ENCODE measurements at regions of chr12 and their contacts with region 1.

Region 1: DNA sequence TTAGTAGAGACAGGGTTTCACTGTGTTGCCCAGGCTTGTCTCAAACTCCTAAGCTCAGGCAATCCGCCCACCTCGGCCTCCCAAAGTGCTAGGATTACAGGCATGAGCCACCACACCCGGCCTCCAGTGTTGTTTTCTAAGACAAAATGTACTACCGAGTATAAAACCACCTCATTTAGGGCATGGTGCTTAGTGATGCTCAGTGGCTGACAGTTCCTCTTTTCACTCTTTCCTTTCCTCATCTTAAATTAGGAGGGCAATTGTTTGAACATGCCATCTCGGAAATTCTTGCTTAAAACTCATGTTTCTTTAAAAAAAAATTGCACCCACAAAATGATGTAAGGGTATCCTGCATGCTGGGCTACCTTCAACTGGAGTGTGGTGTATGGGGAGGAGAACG is 89.0 kb downstream of the RFX4 start:
- DNase-seq: no peak
- ATAC-seq: no peak
- H3K4me3 ChIP-seq: no peak overlapping the region
- H3K27ac ChIP-seq: no peak overlapping the region
- H3K4me1 ChIP-seq: peaks cover 0 to 5% (median 0%) of the 10 kb centered on the region in 12 donors
- H3K27me3 ChIP-seq: peaks cover 0 to 39% (median 3%) of the 10 kb centered on the region in 9 donors
- CTCF ChIP-seq: no peak
- POLR2A ChIP-seq: no peak

Region 2: GRCh38 chr12:106581543-106582248 is 90.1 kb before region 1 on chr12:
- intact Hi-C with region 1: no loop called
- DNase-seq: no peak
- ATAC-seq: peak in 3 of 4 donors; percentile 53 to 76 (median 63)
- H3K4me3 ChIP-seq: peak overlapping the region in 8 of 12 donors; percentile 17 to 33 (median 26)
- H3K27ac ChIP-seq: no peak overlapping the region
- H3K4me1 ChIP-seq: peaks cover 0 to 62% (median 34%) of the 10 kb centered on the region in 12 donors
- H3K27me3 ChIP-seq: peaks cover 58 to 99% (median 92%) of the 10 kb centered on the region in 9 donors
- CTCF ChIP-seq: no peak
- POLR2A ChIP-seq: no peak

Region 3: DNA sequence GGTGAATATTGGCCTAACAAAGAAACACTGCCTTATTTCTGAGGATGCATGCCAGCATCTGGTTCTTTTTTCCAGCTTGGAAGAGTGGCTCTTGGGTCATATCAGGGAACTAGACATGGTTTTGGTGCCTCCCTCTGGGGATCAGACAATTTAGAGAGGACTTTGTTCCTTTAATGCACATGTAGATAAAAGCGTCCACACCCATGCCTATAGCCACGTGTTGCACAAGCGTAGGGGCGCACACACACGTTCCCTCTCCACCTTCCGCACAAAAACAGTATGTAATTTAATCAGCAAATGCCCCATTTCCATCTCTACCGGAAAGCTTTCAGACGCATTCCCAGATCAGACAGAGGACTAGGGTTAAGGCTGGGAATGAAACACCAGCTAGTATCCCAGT is 40.9 kb after region 1 on chr12:
- intact Hi-C with region 1: loop called in 1 of 10 experiments (anchors 2 kb)
- DNase-seq: no peak
- ATAC-seq: no peak
- H3K4me3 ChIP-seq: no peak overlapping the region
- H3K27ac ChIP-seq: no peak overlapping the region
- H3K4me1 ChIP-seq: peaks cover 0 to 2% (median 0%) of the 10 kb centered on the region in 12 donors
- H3K27me3 ChIP-seq: peaks cover 0 to 16% (median 0%) of the 10 kb centered on the region in 9 donors
- CTCF ChIP-seq: no peak
- POLR2A ChIP-seq: no peak

Region 4: GRCh38 chr12:106736051-106736957 is 64.5 kb after region 1 on chr12:
- intact Hi-C with region 1: no loop called
- DNase-seq: no peak
- ATAC-seq: peak in 2 of 4 donors; percentile 47 to 52
- H3K4me3 ChIP-seq: no peak overlapping the region
- H3K27ac ChIP-seq: no peak overlapping the region
- H3K4me1 ChIP-seq: peaks cover 0 to 11% (median 6%) of the 10 kb centered on the region in 12 donors
- H3K27me3 ChIP-seq: peaks cover 0 to 6% (median 0%) of the 10 kb centered on the region in 9 donors
- CTCF ChIP-seq: peak in 2 of 12 donors; percentile 11 to 19
- POLR2A ChIP-seq: no peak